K562 (cell line): ENCODE measurements at regions of chr9 and their contacts with region 1.

Region 1: GRCh38 chr9:96854073-96854876 is at the start of gene ZNF782:
- DNase-seq: peak; percentile 90 to 95 (median 94)
- ATAC-seq: peak; percentile 92
- H3K4me3 ChIP-seq: peak within 1 kb of the TSS; percentile 70
- H3K27ac ChIP-seq: peak within 1 kb of the TSS; percentile 49
- H3K4me1 ChIP-seq: peaks cover 15 to 33% of the 10 kb centered on the region in 2 experiments
- H3K27me3 ChIP-seq: no peaks in the 10 kb centered on the region
- CTCF ChIP-seq: no peak
- EP300 ChIP-seq: no peak
- POLR2A ChIP-seq: peak; percentile 77
- RAD21 ChIP-seq: peak in 1 of 2 experiments; percentile 9; a peak in 1 of 4 replicates
- polyA plus RNA-seq, gene ZNF782: 0.38 to 0.55 TPM

Region 2: DNA sequence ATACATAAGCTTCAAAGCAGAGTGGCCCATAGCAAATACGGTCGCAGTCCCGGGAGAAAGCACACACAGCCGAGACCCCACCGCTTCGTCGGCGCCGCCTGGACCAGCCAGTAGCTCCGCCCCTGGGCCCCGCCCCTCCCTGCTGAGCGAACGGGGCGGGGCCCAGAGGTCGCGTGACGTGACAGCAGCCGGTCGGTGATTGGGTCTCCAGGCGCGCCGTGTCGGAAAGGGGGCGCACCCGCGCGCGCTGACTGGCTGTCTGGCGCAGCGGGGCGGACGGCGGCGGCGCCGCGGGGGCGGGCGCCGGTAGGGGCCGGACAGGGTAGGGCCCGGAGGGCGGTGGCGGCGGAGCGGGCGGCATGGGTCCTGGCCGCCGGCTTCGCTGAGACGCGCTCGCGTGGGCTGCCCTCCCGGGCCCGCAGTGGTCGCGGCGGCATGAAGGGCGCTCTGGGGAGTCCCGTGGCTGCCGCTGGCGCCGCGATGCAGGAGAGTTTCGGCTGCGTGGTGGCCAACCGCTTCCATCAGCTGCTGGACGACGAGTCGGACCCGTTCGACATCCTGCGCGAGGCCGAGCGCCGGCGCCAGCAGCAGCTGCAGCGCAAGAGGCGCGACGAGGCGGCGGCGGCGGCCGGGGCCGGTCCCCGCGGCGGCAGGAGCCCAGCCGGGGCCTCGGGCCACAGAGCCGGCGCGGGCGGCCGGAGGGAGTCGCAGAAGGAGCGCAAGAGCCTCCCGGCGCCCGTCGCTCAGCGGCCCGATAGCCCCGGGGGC is 404.2 kb before region 1 on chr9 and contains the start of gene HABP4:
- CTCF ChIA-PET with region 1: no interaction called
- POLR2A ChIA-PET with region 1: no interaction called
- in situ Hi-C with region 1: no loop called
- intact Hi-C with region 1: no loop called
- DNase-seq: peak; percentile 96 to 99 (median 99)
- ATAC-seq: peak; percentile 100
- H3K4me3 ChIP-seq: peak within 1 kb of the TSS; percentile 58
- H3K27ac ChIP-seq: no peak within 1 kb of the TSS
- H3K4me1 ChIP-seq: peaks cover 2 to 18% of the 10 kb centered on the region in 2 experiments; a peak in 3 of 5 replicates
- H3K27me3 ChIP-seq: peaks cover 2 to 14% of the 10 kb centered on the region in 2 experiments; a peak in 2 of 5 replicates
- CTCF ChIP-seq: peak in 1 of 3 experiments; percentile 8; a peak in 1 of 6 replicates
- EP300 ChIP-seq: no peak
- POLR2A ChIP-seq: no peak
- RAD21 ChIP-seq: no peak
- polyA plus RNA-seq, gene HABP4: 0.38 to 0.52 TPM

Region 3: GRCh38 chr9:96777426-96777864 is 76.8 kb before region 1 on chr9:
- CTCF ChIA-PET with region 1: no interaction called
- POLR2A ChIA-PET with region 1: no interaction called
- in situ Hi-C with region 1: no loop called
- intact Hi-C with region 1: loop called (anchors 5 kb)
- DNase-seq: no peak
- ATAC-seq: peak; percentile 85; the same call in 2 of the 3 replicates
- H3K4me3 ChIP-seq: peak overlapping the region; percentile 61
- H3K27ac ChIP-seq: peak overlapping the region; percentile 76
- H3K4me1 ChIP-seq: peaks cover 7% of the 10 kb centered on the region in 2 experiments; a peak in 2 of 5 replicates
- H3K27me3 ChIP-seq: no peaks in the 10 kb centered on the region
- CTCF ChIP-seq: no peak
- EP300 ChIP-seq: no peak
- POLR2A ChIP-seq: no peak
- RAD21 ChIP-seq: no peak

Region 4: DNA sequence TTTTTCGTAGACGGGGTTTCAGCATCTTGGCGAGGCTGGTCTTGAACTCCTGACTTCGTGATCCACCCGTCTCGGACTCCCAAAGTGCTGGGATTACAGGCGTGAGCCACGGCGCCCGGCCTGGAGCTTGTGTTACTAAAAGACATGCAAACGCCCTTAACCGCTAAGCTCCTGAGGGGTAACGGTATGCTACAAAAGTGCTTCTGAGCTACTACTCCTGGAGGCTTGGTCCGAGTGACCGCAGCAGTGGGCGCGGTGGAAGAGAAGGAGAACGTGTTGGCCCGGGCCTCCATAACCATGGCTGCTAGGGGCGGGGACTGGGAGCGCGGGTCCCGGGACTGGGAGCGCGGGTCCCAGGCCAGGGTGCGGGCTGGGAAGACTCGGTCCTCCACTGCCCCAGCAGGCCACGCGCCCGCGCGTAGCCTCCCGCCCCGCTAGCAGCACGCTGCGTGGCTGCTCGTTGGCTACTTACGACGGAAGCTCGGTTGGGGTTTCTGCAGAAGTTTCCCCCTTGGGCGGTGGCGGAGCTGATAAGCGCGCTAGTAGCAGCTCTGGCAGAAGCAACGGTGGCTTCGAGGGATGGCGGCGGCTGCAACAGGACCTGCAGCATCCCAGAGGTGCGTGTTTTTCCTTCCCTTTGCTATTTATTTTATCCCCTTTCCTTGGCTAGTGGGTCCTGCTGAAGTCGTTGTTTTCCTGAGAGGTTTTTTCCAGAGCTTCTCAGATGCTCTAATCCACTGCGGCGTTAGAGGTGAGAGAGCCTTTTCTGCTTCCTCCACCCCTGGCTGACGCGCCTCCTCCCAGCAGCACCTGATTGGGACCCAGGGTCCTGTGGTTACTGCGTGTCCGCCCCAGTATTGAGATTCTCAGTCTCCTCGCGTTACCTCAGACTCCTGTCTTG is 383.9 kb after region 1 on chr9:
- CTCF ChIA-PET with region 1: no interaction called
- POLR2A ChIA-PET with region 1: no interaction called
- in situ Hi-C with region 1: no loop called
- intact Hi-C with region 1: loop called (anchors 10 kb)
- DNase-seq: peak; percentile 84 to 94 (median 86)
- ATAC-seq: peak; percentile 97
- H3K4me3 ChIP-seq: peak overlapping the region; percentile 76
- H3K27ac ChIP-seq: peak overlapping the region; percentile 100
- H3K4me1 ChIP-seq: peaks cover 14 to 23% of the 10 kb centered on the region in 2 experiments
- H3K27me3 ChIP-seq: no peaks in the 10 kb centered on the region
- CTCF ChIP-seq: no peak; a peak in 1 of 6 replicates
- EP300 ChIP-seq: 0 out of 2 replicates have a peak, but pooled peaks have one; percentile 21
- POLR2A ChIP-seq: peak; percentile 92
- RAD21 ChIP-seq: no peak

Region 5: DNA sequence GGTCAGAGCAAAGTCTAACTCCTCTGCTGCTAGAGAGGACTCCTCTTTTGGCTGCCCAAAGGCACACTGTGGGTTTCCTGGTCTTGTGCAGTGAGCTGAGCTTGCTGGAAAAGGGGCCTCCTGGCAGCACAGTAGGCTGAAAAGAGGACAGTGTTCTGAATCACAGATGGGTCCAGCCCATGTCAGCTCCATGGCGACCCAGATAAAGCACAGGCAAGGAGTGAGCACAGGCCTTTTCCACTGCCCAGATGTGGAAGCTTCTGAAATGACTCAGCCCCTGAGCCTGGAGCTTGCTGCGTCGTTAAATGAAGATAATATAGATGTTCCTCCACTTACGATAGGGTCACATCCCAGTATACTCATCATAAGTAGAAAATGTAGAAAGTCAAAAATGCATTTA is 461.3 kb after region 1 on chr9:
- CTCF ChIA-PET with region 1: no interaction called
- POLR2A ChIA-PET with region 1: no interaction called
- in situ Hi-C with region 1: no loop called
- intact Hi-C with region 1: no loop called
- DNase-seq: peak in 1 of 4 experiments; percentile 37
- ATAC-seq: peak; percentile 57
- H3K4me3 ChIP-seq: no peak overlapping the region
- H3K27ac ChIP-seq: no peak overlapping the region
- H3K4me1 ChIP-seq: no peaks in the 10 kb centered on the region; a peak in 2 of 5 replicates
- H3K27me3 ChIP-seq: no peaks in the 10 kb centered on the region
- CTCF ChIP-seq: no peak
- EP300 ChIP-seq: no peak
- POLR2A ChIP-seq: no peak
- RAD21 ChIP-seq: no peak

Region 6: DNA sequence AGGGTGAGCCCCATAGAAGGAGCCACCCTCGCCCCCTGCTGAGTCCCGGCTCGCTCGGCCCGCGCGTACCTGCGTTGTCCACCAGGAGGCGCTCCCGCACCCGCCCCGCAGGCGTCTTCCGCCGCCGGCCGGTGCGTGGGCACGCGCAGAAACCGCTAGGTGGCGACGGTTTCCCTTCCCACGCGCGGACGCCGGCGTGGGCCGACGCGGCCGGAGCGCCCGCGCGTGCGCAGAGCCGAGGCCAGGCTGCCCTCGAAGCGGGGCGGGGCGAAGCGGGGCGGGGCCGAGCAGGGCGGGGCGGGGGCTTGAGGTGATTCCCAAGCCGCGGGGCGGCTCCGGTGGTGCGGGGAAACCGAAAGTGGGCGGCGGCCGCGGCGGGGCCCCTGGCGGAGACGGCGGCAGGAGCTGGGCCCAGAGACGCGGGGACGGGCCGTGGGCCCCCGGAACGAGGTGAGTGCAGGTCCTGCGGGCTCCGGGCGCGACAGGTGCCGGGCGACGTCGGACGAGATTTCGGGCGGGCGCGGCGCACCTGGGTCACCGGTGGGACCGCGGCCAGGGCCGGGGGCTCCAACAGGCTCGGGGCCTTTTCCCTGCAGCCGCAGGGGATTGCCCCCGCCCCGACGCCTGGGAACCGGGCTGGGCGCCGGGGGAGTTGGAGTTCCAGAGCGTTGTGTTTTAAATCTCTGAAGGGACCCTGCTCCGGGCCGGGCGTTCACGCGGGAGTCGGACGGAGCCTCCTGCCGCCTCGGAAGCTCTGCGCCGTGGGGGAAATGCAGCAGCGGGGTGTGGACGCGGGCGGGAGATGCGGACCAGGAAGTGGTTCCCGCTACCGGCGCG is 557.7 kb after region 1 on chr9 and contains the start of gene TDRD7:
- CTCF ChIA-PET with region 1: interaction called, 3 read pairs
- POLR2A ChIA-PET with region 1: no interaction called
- in situ Hi-C with region 1: loop called (anchors 10 kb)
- intact Hi-C with region 1: no loop called
- DNase-seq: peak; percentile 92 to 99 (median 98)
- ATAC-seq: peak; percentile 92
- H3K4me3 ChIP-seq: peak within 1 kb of the TSS; percentile 82
- H3K27ac ChIP-seq: peak within 1 kb of the TSS; percentile 38
- H3K4me1 ChIP-seq: peaks cover 9 to 12% of the 10 kb centered on the region in 2 experiments; a peak in 3 of 5 replicates
- H3K27me3 ChIP-seq: no peaks in the 10 kb centered on the region; a peak in 1 of 5 replicates
- CTCF ChIP-seq: peak; percentile 97 to 99 (median 99)
- EP300 ChIP-seq: peak; percentile 60; the same call in 1 of the 2 replicates
- POLR2A ChIP-seq: no peak
- RAD21 ChIP-seq: peak; percentile 85 to 89
- polyA plus RNA-seq, gene TDRD7: 2.2 to 2.3 TPM